ENCODE measurements at regions of chr15 and their contacts with region 1.

Region 1: GRCh38 chr15:39920510-39921273 is 626 bp upstream of the GPR176 start:
- DNase-seq: peak; percentile 82 to 91 (median 88)
- ATAC-seq: peak; percentile 95
- H3K4me3 ChIP-seq: peak overlapping the region; percentile 46
- H3K27ac ChIP-seq: peak overlapping the region; percentile 80
- H3K4me1 ChIP-seq: peaks cover 13 to 18% of the 10 kb centered on the region in 2 experiments; a peak in 4 of 5 replicates
- H3K27me3 ChIP-seq: no peaks in the 10 kb centered on the region
- CTCF ChIP-seq: peak in 1 of 3 experiments; percentile 3; a peak in 1 of 6 replicates
- EP300 ChIP-seq: no peak
- POLR2A ChIP-seq: peak; percentile 78
- RAD21 ChIP-seq: peak in 1 of 2 experiments; percentile 14; a peak in 1 of 4 replicates

Region 2: DNA sequence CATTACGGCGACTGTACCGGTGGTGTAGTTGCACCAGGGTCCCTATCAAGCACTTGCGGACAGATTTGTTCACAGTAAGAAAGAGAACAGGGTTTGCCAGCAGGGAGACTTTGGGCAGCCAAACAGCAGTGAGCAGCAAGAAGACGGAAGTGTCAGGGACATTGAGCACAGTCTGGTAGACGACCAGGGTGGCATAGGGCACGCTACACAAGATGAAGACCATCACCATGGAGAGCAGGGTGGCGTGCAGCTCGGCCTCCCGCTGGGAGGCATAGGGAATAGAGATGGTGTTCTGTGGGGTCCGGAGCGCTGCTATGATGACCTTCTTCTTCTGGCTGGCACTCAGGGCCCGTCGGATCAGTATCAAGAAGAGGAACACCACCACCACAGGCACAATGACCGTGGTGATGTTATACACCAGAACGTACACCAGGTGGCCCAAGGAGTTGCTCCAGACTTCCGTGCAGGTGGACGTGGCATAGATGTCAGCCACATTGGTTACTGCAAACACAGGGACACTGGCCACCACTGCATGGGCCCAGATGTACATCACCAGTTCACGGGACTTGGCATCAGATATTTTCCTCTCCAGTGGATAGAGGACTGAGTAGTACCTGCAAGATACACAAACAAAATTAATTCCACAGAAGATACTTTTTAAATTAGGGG is 118.9 kb before region 1 on chr15:
- CTCF ChIA-PET with region 1: no interaction called
- POLR2A ChIA-PET with region 1: no interaction called
- in situ Hi-C with region 1: no loop called
- intact Hi-C with region 1: loop called (anchors 1 kb)
- DNase-seq: peak; percentile 51 to 57 (median 52)
- ATAC-seq: peak; percentile 94
- H3K4me3 ChIP-seq: no peak overlapping the region
- H3K27ac ChIP-seq: no peak overlapping the region
- H3K4me1 ChIP-seq: no peaks in the 10 kb centered on the region
- H3K27me3 ChIP-seq: peaks cover 25 to 32% of the 10 kb centered on the region in 2 experiments
- CTCF ChIP-seq: peak; percentile 61 to 71 (median 67)
- EP300 ChIP-seq: no peak
- POLR2A ChIP-seq: no peak
- RAD21 ChIP-seq: peak; percentile 55 to 81

Region 3: DNA sequence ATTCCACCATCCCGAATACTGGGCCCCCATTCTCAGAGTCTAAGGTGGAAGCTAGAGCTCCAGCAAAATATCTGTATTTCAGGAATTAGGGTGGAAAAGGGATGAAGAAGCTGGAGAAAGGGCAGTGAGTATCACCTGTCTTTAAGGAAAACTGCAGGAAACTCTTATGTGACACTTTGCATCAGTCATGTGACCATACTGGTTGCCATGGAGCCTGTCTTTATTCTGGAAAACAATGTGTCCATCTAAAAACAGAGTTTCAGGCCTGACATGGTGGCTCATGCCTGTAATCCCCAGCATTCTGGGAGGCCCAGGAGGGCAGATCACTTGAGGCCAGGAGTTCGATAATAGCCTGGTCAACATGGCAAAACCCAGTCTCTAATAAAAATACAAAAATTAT is 85.1 kb before region 1 on chr15:
- CTCF ChIA-PET with region 1: no interaction called
- POLR2A ChIA-PET with region 1: no interaction called
- in situ Hi-C with region 1: no loop called
- intact Hi-C with region 1: no loop called
- DNase-seq: no peak
- ATAC-seq: no peak
- H3K4me3 ChIP-seq: no peak overlapping the region
- H3K27ac ChIP-seq: no peak overlapping the region
- H3K4me1 ChIP-seq: no peaks in the 10 kb centered on the region
- H3K27me3 ChIP-seq: peaks cover 3 to 5% of the 10 kb centered on the region in 2 experiments; a peak in 1 of 5 replicates
- CTCF ChIP-seq: no peak
- EP300 ChIP-seq: no peak
- POLR2A ChIP-seq: no peak
- RAD21 ChIP-seq: no peak

Region 4: GRCh38 chr15:39887832-39888231 is 32.9 kb before region 1 on chr15:
- CTCF ChIA-PET with region 1: no interaction called
- POLR2A ChIA-PET with region 1: no interaction called
- in situ Hi-C with region 1: no loop called
- intact Hi-C with region 1: loop called (anchors 5 kb)
- DNase-seq: peak in 1 of 4 experiments; percentile 12
- ATAC-seq: peak; percentile 47; the same call in 2 of the 3 replicates
- H3K4me3 ChIP-seq: no peak overlapping the region
- H3K27ac ChIP-seq: no peak overlapping the region
- H3K4me1 ChIP-seq: peaks cover 0 to 13% of the 10 kb centered on the region in 2 experiments; a peak in 3 of 5 replicates
- H3K27me3 ChIP-seq: no peaks in the 10 kb centered on the region
- CTCF ChIP-seq: peak in 2 of 3 experiments; percentile 22 to 49; a peak in 3 of 6 replicates
- EP300 ChIP-seq: no peak
- POLR2A ChIP-seq: no peak
- RAD21 ChIP-seq: peak in 1 of 2 experiments; percentile 43; a peak in 2 of 4 replicates

Region 5: DNA sequence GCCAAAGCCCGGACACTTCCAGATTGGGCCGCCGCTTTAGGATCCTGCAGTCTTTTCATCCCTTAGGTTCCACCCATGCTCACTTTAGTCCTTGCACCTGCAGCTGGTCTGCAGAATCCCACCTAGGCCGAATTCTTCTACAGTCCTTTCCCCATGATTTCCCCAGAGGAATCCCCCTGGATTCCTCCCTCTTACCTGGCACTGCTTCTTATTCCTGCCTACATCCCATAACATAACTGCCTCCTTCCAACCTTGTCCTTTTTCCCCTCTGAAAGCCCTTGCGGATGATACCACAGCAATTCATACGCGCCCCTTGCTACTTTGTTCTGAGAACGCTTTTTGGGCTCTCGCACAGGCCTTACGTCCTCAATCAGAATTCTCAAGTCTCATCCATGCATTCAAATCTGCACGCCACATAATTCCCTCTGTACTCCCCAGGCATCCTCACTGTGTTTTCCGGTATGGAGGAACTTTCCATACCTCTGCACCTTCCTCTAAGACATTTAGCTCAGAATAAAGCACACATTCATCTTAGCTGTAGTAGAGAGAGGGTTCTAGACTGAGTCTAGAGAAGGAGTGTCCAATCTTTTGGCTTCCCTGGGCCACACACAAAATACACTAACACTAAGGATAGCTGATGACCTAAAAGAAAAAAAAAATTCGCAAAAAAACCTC is 13.8 kb after region 1 on chr15:
- CTCF ChIA-PET with region 1: no interaction called
- POLR2A ChIA-PET with region 1: interaction called, 14 read pairs
- in situ Hi-C with region 1: no loop called
- intact Hi-C with region 1: no loop called
- DNase-seq: peak in 1 of 4 experiments; percentile 32
- ATAC-seq: peak; percentile 53
- H3K4me3 ChIP-seq: peak overlapping the region; percentile 74
- H3K27ac ChIP-seq: peak overlapping the region; percentile 66
- H3K4me1 ChIP-seq: peaks cover 3 to 11% of the 10 kb centered on the region in 2 experiments; a peak in 4 of 5 replicates
- H3K27me3 ChIP-seq: no peaks in the 10 kb centered on the region
- CTCF ChIP-seq: no peak
- EP300 ChIP-seq: no peak
- POLR2A ChIP-seq: no peak
- RAD21 ChIP-seq: no peak

Measured in K562 (cell line).